Esophagus squamous epithelium (tissue), 5 donors: ENCODE measurements at regions of chr4 and their contacts with region 1.

Region 1: DNA sequence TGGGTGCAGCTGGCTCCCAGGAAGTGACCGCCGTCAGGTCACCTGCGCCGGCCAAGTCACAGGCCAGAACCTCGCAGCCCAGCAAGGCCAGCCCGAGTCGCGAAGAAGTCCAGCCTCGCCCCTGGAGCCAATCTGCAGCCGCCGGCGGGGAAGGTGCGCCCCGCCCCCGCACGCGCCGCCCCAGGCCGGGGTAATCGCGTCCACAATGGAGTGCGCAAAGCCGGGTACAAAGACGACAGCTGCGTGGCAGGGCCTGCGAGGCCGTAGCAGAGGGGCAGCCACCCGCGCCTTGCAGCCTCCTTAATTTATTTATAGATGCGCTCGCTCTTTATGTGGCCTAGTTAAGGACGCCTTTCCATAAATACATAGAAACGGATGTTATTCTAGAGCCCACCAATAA is 139.4 kb upstream of the CPEB2 start:
- DNase-seq: no peak
- H3K4me3 ChIP-seq: peak overlapping the region in 2 of 4 donors; percentile 8 to 44
- H3K27ac ChIP-seq: peak overlapping the region in 3 of 4 donors; percentile 25 to 74 (median 63)
- H3K4me1 ChIP-seq: peaks cover 4 to 45% (median 8%) of the 10 kb centered on the region in 3 donors
- H3K27me3 ChIP-seq: peaks cover 0 to 27% (median 0%) of the 10 kb centered on the region in 4 donors
- CTCF ChIP-seq: no peak
- POLR2A ChIP-seq: no peak

Region 2: DNA sequence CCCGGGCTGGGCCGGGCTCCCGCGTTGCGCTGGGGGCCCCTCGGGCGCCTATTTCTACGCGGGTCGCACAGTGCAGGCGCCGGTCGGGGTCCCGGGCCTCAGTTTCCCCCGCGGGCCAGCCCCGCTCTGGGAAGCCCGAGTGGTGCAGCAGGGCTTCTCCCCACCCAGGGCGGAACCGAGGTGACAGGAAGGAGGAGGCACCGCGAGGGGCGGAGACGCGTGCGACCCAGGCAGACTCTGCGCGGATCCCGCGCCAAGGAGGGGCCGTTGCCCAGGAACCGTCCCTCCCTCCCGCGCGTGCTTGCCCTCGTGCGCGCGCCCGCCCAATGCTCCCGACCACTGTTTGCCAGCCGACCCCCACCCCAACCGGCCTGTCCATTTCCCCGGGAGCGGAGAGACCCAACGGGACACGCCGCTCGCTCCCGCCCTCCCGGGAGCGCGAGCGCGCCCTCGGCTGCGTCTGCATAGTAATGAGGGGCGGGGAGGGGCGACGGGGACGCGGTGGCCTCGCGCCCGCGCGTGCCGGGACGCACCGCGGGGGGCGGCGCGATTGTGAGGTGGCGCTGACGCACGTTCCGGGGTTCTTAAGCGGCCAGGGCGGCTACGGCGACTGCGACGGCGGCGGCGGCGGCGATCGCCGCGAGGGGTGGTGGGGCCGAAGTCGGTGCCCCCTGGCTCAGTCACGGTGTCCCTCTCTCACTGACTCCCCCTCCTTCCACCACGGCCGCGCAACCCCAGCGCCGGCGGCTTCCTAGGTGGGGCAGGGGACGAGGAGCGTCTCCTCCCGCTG is 139.2 kb after region 1 on chr4 and contains the start of gene CPEB2:
- intact Hi-C with region 1: loop called (anchors 10 kb)
- DNase-seq: peak; percentile 95
- H3K4me3 ChIP-seq: peak within 1 kb of the TSS; percentile 89 to 99 (median 94)
- H3K27ac ChIP-seq: peak within 1 kb of the TSS; percentile 94 to 100 (median 100)
- H3K4me1 ChIP-seq: peaks cover 2 to 43% (median 8%) of the 10 kb centered on the region in 3 donors
- H3K27me3 ChIP-seq: no peaks in the 10 kb centered on the region
- CTCF ChIP-seq: peak in 2 of 6 experiments; percentile 3 to 9
- POLR2A ChIP-seq: peak in 3 of 4 donors; percentile 95 to 99 (median 99)
- total RNA-seq, gene CPEB2: 10.5 to 32.6 (median 22.6) TPM

Region 3: DNA sequence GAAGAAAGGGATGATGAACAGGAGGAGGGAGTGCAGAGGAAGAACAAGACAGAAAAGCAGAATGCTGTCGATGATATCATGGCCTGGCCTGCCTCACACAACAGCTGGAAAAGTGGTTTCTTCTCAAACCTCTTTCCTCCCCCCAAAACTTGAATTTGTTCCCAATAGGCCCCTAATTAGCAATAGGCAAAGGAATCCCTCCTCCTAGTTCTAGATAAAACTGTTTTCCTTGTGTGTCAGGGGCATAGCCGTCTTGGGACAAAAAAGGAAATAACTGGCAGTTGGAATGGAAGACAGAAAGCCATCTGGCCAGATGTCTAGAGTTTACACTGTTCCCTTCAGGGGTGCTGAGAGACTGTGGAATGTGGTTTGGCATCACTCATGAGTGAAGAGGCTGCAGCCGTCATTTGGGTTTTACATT is 387.1 kb after region 1 on chr4:
- intact Hi-C with region 1: no loop called
- DNase-seq: no peak
- H3K4me3 ChIP-seq: no peak overlapping the region
- H3K27ac ChIP-seq: no peak overlapping the region
- H3K4me1 ChIP-seq: peaks cover 0 to 3% (median 0%) of the 10 kb centered on the region in 3 donors
- H3K27me3 ChIP-seq: no peaks in the 10 kb centered on the region
- CTCF ChIP-seq: no peak
- POLR2A ChIP-seq: no peak